ENCODE measurements at regions of chr11 and their contacts with region 1.

Region 1: DNA sequence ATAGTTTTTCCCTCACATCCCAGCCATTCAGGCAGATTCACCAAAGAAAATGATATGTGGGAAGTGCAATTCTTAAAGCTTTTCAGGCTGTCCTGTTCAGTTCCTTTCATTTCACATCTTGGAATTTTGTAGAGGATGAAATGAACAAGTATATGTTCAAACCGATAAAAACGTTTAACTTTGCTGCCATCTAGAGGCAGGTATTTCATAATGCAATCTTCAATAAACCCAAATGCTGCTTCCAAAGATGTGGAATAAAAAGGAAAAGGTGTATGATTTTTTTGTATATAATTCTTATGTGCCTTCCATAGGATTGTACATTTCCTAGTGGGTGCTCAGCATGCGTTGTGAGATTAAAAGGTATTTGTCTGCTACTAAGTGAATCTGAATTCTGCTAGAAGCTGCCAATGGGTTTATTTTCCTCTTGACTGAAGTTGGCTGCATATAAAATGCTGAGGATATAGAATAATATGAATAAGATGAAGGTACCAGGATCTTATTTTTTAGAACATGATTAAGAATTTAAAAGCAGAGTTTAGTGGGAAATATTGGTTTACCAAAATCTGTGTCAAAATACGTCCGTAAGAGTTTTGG is 199.3 kb downstream of the PGR start:
- DNase-seq: no peak

Region 2: DNA sequence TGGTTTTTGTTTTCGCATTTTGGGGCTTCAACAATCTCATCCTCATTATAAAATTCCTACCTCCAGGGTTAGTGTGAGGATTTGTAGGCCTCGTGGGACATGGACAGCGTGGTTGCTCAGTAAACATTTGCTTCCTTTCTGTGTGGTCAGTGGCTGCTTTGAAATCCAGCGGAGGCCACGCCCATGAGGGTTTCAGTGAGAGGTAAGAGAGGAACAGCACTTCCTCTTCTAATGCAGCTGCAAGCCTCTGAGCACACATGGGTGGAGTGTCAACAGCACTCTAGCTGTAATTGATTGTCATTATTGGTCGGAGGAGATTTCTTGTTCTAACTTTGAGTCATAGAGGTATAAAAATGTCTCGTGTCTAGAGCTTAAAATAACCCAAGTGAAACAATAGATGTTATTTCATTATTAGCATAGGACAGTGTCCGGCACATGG is 249.2 kb before region 1 on chr11:
- intact Hi-C with region 1: loop called (anchors 5 kb)
- DNase-seq: peak in 3 of 10 donors; percentile 12 to 83 (median 73)